CD14-positive monocyte (primary cell): ENCODE measurements at regions of chr14 and their contacts with region 1.

Region 1: DNA sequence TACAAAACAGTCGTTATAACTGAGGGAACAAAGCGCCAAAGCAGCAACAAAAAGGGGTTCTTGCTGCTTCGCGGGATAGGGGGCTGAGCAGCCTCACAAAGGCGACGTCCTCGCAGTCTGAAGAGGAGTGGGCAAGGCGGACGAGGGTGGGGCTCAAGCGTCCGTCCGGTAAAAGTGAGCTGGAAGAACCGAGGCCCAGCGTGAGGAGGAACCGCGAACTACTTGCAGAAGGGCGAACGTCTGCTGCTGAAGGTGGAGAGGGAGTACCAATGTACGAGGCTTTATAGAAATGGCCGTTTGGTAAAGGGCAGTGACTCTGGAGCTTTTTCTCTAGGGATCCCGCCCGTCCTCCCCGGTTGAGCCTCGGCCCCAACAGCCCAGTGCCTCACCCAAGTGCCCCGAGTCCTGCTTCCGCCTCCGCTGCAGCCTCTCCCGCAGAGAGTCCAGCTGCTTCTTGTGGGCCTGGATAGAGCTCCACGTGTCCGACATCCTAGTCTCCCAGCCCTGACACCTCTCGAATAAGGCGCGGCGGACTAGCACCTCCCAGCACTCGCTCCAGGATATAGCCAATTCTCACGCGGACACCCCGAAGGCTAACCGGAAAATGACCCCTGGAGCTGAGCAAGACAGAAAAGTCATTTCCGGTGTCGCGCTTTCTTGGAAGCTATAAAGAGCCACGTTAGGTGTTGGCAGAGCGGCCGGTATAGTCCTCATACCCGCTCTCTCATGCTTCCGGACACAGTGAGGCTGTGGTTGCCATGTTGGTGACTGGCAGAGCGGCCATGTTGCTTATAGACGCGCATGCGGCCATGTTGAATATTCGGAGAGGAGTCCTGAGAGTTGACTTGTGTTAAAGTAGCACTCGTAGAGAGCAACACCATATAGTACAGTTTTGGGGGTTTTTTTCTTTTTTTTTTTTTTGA is at the start of gene METTL3:
- DNase-seq: peak; percentile 96 to 100 (median 98)
- H3K4me3 ChIP-seq: peak within 1 kb of the TSS; percentile 58 to 75 (median 60)
- H3K4me3 Mint-ChIP-seq: peak within 1 kb of the TSS; percentile 98
- H3K27ac ChIP-seq: peak within 1 kb of the TSS; percentile 74
- H3K27ac Mint-ChIP-seq: peak within 1 kb of the TSS; percentile 95 to 98 (median 97)
- H3K4me1 ChIP-seq: peaks cover 18 to 26% of the 10 kb centered on the region in 2 donors
- H3K4me1 Mint-ChIP-seq: peaks cover 22% of the 10 kb centered on the region
- H3K27me3 ChIP-seq: no peaks in the 10 kb centered on the region
- H3K27me3 Mint-ChIP-seq: peaks cover 6 to 10% (median 9%) of the 10 kb centered on the region in 3 donors
- CTCF ChIP-seq: no peak
- polyA plus RNA-seq, gene METTL3: 9.5 to 116 (median 10.8) TPM

Region 2: DNA sequence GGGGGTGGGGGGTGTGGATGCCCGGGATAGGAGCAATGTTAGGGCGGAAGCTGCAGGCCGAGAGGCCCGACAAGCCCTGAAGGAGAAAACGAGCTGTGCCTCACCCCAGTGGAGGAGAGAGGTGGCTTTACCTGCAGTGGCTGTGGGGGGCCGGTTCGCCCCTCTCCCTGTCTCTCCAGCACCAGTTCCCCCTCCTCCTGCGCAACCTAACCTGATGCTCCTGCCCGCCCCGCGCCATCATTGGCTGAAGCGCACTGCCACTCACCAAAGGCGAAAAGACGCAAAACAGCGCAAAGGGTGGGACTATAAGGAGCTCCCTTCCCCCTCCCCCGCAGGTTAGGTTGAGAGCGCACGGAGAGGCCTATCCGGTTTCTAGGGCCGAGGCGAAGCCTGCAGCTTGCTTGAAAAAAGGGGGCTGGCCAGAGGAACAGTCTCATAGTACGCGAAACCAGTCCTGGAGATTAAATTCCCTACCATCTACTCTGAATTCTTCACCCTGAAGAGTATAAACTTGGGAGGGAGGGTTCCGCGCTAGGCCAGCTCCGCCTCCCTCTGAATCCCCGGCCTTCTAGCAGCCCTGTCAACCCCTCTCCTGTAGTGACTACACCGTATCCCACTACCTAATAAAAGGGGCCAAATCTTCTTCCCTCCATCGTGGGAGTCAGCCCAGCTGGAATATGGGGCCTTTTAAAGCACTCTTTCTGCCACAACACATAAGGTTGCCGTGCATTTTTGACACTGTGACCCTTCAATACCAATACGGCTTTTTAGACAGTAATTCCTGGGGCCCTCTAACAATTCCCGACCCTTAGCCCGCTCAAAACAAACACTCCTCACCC is 73.7 kb before region 1 on chr14:
- intact Hi-C with region 1: loop called (anchors 2 to 10 kb)
- DNase-seq: peak; percentile 97 to 98 (median 97)
- H3K4me3 ChIP-seq: peak overlapping the region; percentile 79 to 94 (median 93)
- H3K4me3 Mint-ChIP-seq: peak overlapping the region; percentile 85 to 86
- H3K27ac ChIP-seq: peak overlapping the region; percentile 87 to 96
- H3K27ac Mint-ChIP-seq: peak overlapping the region; percentile 82 to 97 (median 91)
- H3K4me1 ChIP-seq: peaks cover 17 to 29% of the 10 kb centered on the region in 2 donors
- H3K4me1 Mint-ChIP-seq: peaks cover 35% of the 10 kb centered on the region
- H3K27me3 ChIP-seq: no peaks in the 10 kb centered on the region
- H3K27me3 Mint-ChIP-seq: no peaks in the 10 kb centered on the region
- CTCF ChIP-seq: no peak

Region 3: DNA sequence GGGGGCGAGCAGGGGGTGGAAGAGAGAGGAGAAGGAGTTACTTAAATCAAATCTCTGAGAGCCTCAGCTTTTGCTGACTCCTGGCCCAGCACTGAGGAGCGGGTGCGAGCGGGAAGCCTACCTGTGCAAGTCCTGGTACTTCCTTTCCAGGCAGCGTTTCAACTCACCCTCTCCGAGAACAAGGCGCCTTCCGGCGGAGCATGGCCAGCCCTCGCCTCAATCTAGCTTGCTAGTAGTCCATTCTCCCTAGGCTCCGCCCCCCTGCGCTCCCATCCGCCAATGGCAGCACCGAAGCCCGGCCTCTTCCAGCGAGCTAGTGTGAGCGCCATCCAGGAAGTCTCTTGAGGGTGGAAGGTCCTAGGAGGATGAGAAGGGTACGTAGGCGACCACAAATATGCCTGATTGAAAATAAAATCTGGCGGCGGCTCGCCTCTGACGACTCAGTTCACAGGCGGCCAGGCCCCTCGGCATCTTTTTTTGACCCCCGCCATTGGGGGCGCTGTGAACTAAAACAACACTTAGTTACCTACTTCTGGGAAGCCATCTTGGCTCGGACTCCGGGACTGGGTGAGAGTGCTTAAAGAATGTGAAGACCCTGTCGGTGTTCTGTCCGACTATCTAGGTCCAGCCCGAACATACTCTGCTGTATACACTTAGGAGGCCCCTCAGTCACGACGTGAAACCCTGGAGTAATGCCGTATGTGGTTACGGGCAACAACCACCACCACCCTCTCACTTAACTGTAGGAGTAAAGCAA is 54.9 kb before region 1 on chr14 and contains the start of gene CHD8:
- intact Hi-C with region 1: loop called in 1 of 2 experiments (anchors 5 kb)
- DNase-seq: peak; percentile 99 to 100 (median 99)
- H3K4me3 ChIP-seq: peak within 1 kb of the TSS; percentile 75 to 99 (median 95)
- H3K4me3 Mint-ChIP-seq: peak within 1 kb of the TSS; percentile 93 to 98
- H3K27ac ChIP-seq: peak within 1 kb of the TSS; percentile 93 to 98
- H3K27ac Mint-ChIP-seq: peak within 1 kb of the TSS; percentile 97 to 99 (median 98)
- H3K4me1 ChIP-seq: peaks cover 15 to 24% of the 10 kb centered on the region in 2 donors
- H3K4me1 Mint-ChIP-seq: peaks cover 25% of the 10 kb centered on the region
- H3K27me3 ChIP-seq: no peaks in the 10 kb centered on the region
- H3K27me3 Mint-ChIP-seq: peaks cover 0 to 1% (median 0%) of the 10 kb centered on the region in 3 donors
- CTCF ChIP-seq: peak; percentile 66
- polyA plus RNA-seq, gene CHD8: 8.2 to 34.2 (median 15.1) TPM

Region 4: GRCh38 chr14:21476925-21477681 is 33.9 kb before region 1 on chr14 and contains the starts of genes RAB2B and TOX4:
- intact Hi-C with region 1: loop called in 1 of 2 experiments (anchors 1 kb)
- DNase-seq: peak; percentile 97
- H3K4me3 ChIP-seq: peak within 1 kb of the TSS; percentile 58 to 100 (median 97)
- H3K4me3 Mint-ChIP-seq: peak within 1 kb of the TSS; percentile 100
- H3K27ac ChIP-seq: peak within 1 kb of the TSS; percentile 84 to 95
- H3K27ac Mint-ChIP-seq: peak within 1 kb of the TSS; percentile 99 to 100 (median 100)
- H3K4me1 ChIP-seq: peaks cover 12 to 26% of the 10 kb centered on the region in 2 donors
- H3K4me1 Mint-ChIP-seq: peaks cover 18% of the 10 kb centered on the region
- H3K27me3 ChIP-seq: no peaks in the 10 kb centered on the region
- H3K27me3 Mint-ChIP-seq: peaks cover 0 to 1% (median 0%) of the 10 kb centered on the region in 3 donors
- CTCF ChIP-seq: peak; percentile 97
- polyA plus RNA-seq, gene RAB2B: 2.1 to 9.9 (median 5.1) TPM
- polyA plus RNA-seq, gene TOX4: 28.3 to 73.1 (median 68.5) TPM

Region 5: GRCh38 chr14:21614240-21614639 is 103.2 kb after region 1 on chr14:
- intact Hi-C with region 1: no loop called
- DNase-seq: no peak
- H3K4me3 ChIP-seq: no peak overlapping the region
- H3K4me3 Mint-ChIP-seq: no peak overlapping the region
- H3K27ac ChIP-seq: no peak overlapping the region
- H3K27ac Mint-ChIP-seq: no peak overlapping the region
- H3K4me1 ChIP-seq: no peaks in the 10 kb centered on the region
- H3K4me1 Mint-ChIP-seq: no peaks in the 10 kb centered on the region
- H3K27me3 ChIP-seq: no peaks in the 10 kb centered on the region
- H3K27me3 Mint-ChIP-seq: peaks cover 2 to 5% (median 3%) of the 10 kb centered on the region in 3 donors
- CTCF ChIP-seq: no peak